Activated CD4-positive, alpha-beta T cell treated with anti-CD3 and anti-CD28 coated beads for 36 hours (primary cell): ENCODE measurements at regions of chr13 and their contacts with region 1.

Region 1: DNA sequence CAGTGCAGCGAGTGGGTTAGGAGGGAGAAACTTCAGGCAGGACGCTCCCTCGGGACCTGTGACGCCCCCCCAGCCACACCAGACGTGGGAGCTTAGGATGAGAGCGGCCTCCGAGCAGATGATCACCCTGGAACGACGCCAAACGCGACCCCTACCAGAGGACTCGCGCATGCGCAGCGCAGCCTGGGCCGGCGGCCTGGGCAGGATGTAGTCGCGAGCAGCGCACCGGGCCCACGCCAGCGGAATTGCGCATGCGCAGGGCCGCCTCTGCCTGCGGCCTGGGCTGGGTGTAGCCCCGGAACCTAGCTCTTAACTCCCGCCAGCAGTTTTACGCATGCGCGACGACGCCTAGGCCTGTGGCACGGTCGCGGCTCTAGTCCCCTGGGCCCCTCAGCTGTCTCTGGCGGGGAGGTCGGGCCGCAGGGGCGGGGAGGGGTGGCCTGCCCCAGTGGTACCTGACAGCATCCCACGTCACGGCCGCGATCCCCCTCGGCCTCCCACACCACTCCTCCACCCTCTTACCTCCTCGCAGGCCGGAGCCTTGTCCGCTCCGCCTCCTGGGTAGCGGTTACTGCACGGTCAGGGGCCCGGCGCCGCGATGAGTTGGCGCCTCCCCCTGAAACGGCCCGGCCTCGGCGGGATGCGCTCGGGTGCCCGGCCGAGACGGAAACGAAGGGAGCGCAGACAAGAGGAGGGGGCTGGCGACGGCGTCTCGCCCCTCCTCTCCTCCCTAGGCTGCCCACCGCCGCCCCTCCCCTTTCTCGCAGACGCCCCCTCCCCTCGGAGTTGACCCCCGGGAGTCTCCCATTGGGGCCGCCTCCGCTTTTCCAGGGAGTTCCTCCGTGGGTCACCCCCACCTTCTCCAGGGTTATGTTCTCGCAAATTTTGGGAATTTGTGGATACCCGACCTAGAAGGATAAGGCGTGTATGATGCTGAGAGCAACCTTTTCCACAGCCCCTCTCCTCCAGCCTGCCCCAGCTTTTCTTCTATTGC is at the start of gene RCBTB2:
- DNase-seq: peak; percentile 99
- ATAC-seq: peak; percentile 93
- H3K4me3 Mint-ChIP-seq: peak within 1 kb of the TSS; percentile 92
- H3K27ac Mint-ChIP-seq: peak within 1 kb of the TSS; percentile 97
- H3K4me1 Mint-ChIP-seq: peaks cover 24% of the 10 kb centered on the region
- H3K27me3 Mint-ChIP-seq: no peaks in the 10 kb centered on the region
- total RNA-seq, gene RCBTB2: 1.1 to 1.6 TPM

Region 2: DNA sequence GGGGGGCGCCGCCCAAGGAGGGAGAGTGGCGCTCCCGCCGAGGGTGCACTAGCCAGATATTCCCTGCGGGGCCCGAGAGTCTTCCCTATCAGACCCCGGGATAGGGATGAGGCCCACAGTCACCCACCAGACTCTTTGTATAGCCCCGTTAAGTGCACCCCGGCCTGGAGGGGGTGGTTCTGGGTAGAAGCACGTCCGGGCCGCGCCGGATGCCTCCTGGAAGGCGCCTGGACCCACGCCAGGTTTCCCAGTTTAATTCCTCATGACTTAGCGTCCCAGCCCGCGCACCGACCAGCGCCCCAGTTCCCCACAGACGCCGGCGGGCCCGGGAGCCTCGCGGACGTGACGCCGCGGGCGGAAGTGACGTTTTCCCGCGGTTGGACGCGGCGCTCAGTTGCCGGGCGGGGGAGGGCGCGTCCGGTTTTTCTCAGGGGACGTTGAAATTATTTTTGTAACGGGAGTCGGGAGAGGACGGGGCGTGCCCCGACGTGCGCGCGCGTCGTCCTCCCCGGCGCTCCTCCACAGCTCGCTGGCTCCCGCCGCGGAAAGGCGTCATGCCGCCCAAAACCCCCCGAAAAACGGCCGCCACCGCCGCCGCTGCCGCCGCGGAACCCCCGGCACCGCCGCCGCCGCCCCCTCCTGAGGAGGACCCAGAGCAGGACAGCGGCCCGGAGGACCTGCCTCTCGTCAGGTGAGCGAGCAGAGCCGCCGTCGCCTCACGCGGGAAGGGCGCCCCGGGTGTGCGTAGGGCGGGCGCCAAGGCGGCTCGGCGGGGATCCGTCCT is 229.3 kb before region 1 on chr13 and contains the start of gene RB1:
- CTCF ChIA-PET with region 1: no interaction called
- POLR2A ChIA-PET with region 1: no interaction called
- intact Hi-C with region 1: loop called in 1 of 2 experiments (anchors 1 kb)
- DNase-seq: peak; percentile 94
- ATAC-seq: peak; percentile 81
- H3K4me3 Mint-ChIP-seq: peak within 1 kb of the TSS; percentile 81
- H3K27ac Mint-ChIP-seq: peak within 1 kb of the TSS; percentile 99
- H3K4me1 Mint-ChIP-seq: peaks cover 27% of the 10 kb centered on the region
- H3K27me3 Mint-ChIP-seq: no peaks in the 10 kb centered on the region
- total RNA-seq, gene RB1: 26.9 to 32.8 TPM

Region 3: DNA sequence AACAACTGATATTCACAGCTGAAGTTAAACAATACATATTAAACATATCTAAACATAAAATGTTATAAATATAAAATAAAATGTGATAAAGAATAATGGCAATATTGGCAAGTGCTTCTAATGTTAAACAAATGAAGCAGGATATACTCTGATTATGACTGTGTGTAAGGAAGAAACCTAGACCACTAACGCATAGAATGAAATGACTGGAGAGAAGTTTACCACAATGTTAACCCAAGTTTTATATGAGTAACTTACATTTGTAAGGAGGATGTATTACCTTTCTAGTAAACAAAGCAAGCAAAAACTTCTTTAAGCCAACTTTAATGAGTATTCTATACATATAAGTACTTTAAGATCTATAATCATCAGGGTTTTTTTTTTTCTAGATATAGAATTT is 186.2 kb before region 1 on chr13:
- CTCF ChIA-PET with region 1: no interaction called
- POLR2A ChIA-PET with region 1: no interaction called
- intact Hi-C with region 1: no loop called
- DNase-seq: no peak
- ATAC-seq: peak; percentile 64
- H3K4me3 Mint-ChIP-seq: no peak overlapping the region
- H3K27ac Mint-ChIP-seq: no peak overlapping the region
- H3K4me1 Mint-ChIP-seq: no peaks in the 10 kb centered on the region
- H3K27me3 Mint-ChIP-seq: no peaks in the 10 kb centered on the region

Region 4: DNA sequence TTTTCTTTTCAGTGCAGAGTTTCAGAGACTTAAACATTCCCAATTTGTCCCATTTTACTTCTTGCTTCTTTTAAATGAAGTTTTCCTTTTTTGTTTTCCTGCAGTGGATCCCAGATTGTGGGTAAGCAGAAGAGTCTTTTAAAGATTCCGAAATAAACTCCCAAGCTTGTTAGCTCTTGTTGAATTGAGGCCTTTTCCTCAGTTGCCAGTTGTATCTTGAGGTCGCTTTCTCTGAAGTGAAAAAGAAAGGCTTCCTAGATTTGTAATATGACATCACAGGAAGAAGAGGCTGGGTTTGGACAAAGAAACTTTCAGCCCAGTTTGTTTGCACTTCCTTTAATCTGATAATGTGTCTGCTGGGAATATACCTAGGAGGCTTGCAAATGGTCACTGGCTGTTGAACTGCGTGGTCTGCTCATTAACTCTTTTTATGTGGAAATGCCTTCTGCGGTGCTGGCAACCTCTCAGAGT is 119.9 kb before region 1 on chr13 and contains the start of gene LPAR6:
- CTCF ChIA-PET with region 1: no interaction called
- POLR2A ChIA-PET with region 1: no interaction called
- intact Hi-C with region 1: loop called in 1 of 2 experiments (anchors 2 kb)
- DNase-seq: no peak
- ATAC-seq: no peak
- H3K4me3 Mint-ChIP-seq: peak within 1 kb of the TSS; percentile 99
- H3K27ac Mint-ChIP-seq: peak within 1 kb of the TSS; percentile 98
- H3K4me1 Mint-ChIP-seq: peaks cover 39% of the 10 kb centered on the region
- H3K27me3 Mint-ChIP-seq: no peaks in the 10 kb centered on the region
- total RNA-seq, gene LPAR6: 6.8 to 7.9 TPM

Region 5: GRCh38 chr13:48505597-48506091 is 27.2 kb before region 1 on chr13:
- CTCF ChIA-PET with region 1: no interaction called
- POLR2A ChIA-PET with region 1: interaction called, 6 read pairs
- intact Hi-C with region 1: loop called in 1 of 2 experiments (anchors 1 kb)
- DNase-seq: peak; percentile 64
- ATAC-seq: peak; percentile 71
- H3K4me3 Mint-ChIP-seq: peak overlapping the region; percentile 22
- H3K27ac Mint-ChIP-seq: peak overlapping the region; percentile 85
- H3K4me1 Mint-ChIP-seq: peaks cover 57% of the 10 kb centered on the region
- H3K27me3 Mint-ChIP-seq: no peaks in the 10 kb centered on the region

Region 6: DNA sequence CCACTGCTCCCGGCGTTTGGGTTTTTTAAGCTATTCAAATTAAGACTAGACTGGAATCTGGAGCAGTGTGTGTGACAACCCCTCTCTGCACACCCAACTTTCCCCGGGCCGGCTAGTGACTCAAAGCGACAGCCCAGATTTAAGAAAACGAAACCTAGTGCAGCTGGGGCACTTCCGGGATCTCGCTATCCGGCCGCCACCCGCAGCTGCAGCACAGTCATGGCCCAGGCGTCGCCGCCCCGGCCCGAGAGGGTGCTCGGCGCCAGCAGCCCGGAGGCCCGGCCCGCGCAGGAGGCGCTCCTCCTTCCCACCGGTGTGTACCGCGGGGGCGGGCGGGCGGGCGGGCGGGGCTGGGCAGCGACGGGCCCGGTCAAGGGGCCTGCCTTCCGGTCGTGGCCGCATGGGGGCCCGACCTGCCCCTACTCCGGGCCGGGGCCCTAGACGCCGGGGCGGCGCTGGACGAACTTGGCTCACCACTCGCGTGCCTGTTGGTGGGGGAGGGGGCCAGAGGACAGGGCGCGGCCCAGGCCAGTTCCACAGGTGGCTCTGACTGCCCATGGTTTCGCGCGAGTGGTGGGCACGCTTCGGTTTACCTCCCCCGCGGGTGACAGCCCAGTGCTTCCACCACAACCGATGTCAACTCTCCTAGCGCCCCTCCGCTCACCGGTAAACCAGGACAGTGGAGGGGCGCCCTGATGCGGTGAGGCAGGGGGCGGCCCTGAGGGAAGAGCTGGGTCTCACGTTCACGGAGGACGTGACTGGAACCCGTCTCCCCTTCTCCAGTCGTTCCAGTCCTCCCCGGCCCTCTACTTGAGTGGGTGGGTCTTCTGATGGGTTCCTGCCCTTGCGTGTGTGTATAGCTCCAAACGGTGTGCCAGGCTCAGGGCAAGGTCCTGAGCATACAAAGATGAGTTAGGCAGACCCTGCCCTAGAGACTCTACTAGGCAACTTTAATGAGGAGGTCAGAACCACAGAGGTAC is 963.3 kb after region 1 on chr13 and contains the start of gene PHF11:
- CTCF ChIA-PET with region 1: no interaction called
- POLR2A ChIA-PET with region 1: no interaction called
- intact Hi-C with region 1: loop called in 1 of 2 experiments (anchors 2 kb)
- DNase-seq: peak; percentile 95
- ATAC-seq: peak; percentile 81
- H3K4me3 Mint-ChIP-seq: peak within 1 kb of the TSS; percentile 91
- H3K27ac Mint-ChIP-seq: peak within 1 kb of the TSS; percentile 99
- H3K4me1 Mint-ChIP-seq: peaks cover 49% of the 10 kb centered on the region
- H3K27me3 Mint-ChIP-seq: no peaks in the 10 kb centered on the region
- total RNA-seq, gene PHF11: 84.0 to 106 TPM